Activated B cell treated with CpG ODN at 0.5 μM for 24 hours (primary cell): ENCODE measurements at regions of chr1 and their contacts with region 1.

Region 1: DNA sequence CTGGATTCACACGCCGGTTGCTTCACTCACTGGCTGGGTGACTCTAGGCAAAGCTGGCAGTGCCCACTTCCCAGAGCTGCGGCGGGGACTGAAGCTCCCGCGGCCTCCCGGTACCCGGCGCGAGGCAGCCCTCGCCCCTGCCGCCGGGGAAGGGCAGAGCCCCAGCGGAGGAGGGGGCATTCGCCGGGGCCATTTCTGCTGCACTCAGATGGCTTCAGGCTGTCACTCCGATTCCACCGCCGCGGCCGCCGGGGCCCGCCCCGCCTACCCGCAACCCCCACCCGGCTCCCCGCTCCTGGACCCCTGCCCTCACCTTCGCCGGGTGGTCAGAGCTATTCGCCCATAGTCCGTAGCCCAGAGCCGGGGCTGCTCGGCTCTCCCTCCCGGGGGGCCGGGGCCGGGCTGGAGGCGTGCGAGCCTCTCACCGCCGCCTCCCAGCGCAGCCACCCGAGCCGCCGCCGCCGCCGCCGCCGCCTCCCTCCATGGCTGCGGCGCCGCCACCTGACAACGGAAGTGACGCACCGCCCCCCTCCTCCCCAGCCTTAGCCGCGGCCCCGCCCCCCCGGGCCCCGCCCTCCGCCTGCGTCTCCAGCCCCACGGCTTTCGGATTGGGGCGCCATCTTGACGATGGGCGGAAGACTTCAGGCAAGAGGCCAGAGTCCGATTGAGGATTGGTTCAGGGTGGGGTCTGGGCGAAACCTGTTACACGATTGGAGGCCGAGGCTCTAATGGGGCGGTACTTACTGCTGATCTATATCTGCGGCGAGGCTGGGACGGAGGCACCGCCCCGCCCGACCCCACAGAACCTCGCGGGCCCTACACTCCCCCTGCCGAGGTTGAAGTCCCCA is at the start of gene STK40:
- DNase-seq: peak; percentile 88
- ATAC-seq: peak; percentile 83
- H3K4me3 Mint-ChIP-seq: peak within 1 kb of the TSS; percentile 91
- H3K27ac Mint-ChIP-seq: peak within 1 kb of the TSS; percentile 100
- H3K4me1 Mint-ChIP-seq: peaks cover 88% of the 10 kb centered on the region
- H3K27me3 Mint-ChIP-seq: no peaks in the 10 kb centered on the region
- CTCF ChIP-seq: no peak
- total RNA-seq, gene STK40: 62.7 and 63.7 TPM in 2 replicates

Region 2: GRCh38 chr1:35379317-35380000 is 1006.2 kb before region 1 on chr1:
- CTCF ChIA-PET with region 1: no interaction called
- POLR2A ChIA-PET with region 1: no interaction called
- intact Hi-C with region 1: no loop called
- DNase-seq: no peak
- ATAC-seq: no peak
- H3K4me3 Mint-ChIP-seq: no peak overlapping the region
- H3K27ac Mint-ChIP-seq: no peak overlapping the region
- H3K4me1 Mint-ChIP-seq: no peaks in the 10 kb centered on the region
- H3K27me3 Mint-ChIP-seq: no peaks in the 10 kb centered on the region
- CTCF ChIP-seq: no peak

Region 3: DNA sequence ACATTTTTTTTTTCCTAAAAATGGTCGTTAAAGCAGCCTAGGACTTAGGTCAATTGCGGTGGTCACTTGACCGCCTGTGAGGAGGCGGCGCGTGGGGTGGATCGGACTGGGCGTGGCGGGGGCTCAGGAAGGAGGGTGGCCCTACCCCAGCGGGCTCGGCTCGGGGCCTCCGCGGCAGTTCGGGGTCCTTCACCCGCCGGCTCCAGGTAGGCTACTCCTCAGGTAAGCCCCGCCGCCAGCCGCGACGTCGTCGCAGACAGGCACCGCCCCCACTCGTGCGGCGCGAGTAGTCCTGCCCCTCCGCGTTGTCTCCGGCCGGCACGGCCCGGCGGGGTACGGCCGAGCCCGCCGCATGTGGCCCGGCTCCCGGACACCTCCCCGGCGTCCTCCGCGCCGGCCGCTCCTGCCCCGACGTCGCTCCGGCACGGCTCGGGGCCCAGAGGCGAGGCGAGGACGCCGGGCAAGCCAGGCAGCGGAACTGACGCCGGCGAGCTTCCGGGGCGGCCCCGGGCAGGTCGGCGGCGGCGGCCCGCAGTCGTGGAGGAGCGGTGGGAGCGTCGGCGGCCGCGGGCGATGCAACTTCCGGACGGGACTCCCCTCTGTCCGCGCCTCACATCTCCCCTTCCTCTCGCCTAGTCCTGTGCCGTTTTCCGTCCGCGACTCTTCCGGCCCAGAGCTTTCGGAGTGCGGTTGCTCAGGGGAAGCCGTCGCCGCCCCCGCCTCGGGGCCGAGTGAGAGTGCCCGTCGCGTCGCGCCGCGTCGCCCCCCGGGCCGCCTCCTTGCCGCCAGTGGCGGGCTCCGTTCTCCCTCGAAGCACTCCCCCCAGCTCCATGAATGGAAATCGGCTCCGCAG is 454.8 kb before region 1 on chr1 and contains the start of gene AGO3:
- CTCF ChIA-PET with region 1: no interaction called
- POLR2A ChIA-PET with region 1: no interaction called
- intact Hi-C with region 1: loop called (anchors 5 kb)
- DNase-seq: peak; percentile 86
- ATAC-seq: peak; percentile 91
- H3K4me3 Mint-ChIP-seq: peak within 1 kb of the TSS; percentile 91
- H3K27ac Mint-ChIP-seq: peak within 1 kb of the TSS; percentile 91
- H3K4me1 Mint-ChIP-seq: peaks cover 28% of the 10 kb centered on the region
- H3K27me3 Mint-ChIP-seq: no peaks in the 10 kb centered on the region
- CTCF ChIP-seq: no peak
- total RNA-seq, gene AGO3: 30.7 and 37.2 TPM in 2 replicates

Region 4: DNA sequence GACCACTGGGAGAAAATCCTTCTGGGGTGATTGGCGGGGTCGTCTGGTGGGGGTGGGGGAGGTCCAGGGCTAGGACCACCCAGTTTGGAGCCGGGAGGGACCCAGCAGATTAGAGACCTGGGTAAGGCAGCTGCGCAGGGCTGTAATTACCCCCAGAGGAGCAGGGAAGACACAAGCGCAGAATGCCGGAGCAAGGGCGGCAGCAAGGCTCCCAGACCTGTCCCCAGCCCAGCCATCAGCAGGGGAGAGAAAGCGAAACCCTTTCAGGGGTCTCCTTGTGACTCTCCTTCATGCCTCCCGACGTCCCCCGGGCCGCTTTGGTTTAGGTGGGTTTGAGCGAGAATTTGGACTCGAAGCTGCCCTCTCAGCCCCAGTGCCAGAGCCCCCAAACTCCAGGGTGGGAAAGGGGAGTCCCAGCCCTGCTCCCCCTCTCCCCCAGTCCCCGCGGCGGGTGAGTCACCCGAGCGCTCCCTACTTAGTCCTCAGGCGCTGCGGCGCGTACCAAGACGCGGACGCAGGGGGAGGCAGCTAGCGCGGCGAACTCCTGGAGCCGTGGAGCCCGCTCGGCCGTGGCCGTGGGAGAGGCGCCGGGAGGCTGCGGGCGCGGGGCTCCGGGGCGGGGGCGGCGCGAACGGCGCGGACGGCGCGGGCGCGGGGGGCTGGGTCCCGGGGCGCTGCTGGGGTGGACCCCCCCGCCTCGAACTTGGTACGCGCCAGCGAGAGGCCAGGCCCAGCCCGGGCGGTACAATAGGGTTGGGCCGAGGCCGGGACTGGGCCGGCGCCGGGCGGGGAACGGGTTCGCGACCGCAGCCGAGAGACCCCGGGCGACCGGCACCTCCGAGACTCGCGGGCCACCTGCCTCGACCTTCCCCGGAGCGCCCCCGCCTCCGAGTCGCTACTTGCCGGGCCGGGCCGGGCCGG is 230.0 kb before region 1 on chr1 and contains the start of gene MAP7D1:
- CTCF ChIA-PET with region 1: no interaction called
- POLR2A ChIA-PET with region 1: interaction called, 18 read pairs
- intact Hi-C with region 1: no loop called
- DNase-seq: peak; percentile 88
- ATAC-seq: peak; percentile 76
- H3K4me3 Mint-ChIP-seq: peak within 1 kb of the TSS; percentile 89
- H3K27ac Mint-ChIP-seq: peak within 1 kb of the TSS; percentile 90
- H3K4me1 Mint-ChIP-seq: peaks cover 65% of the 10 kb centered on the region
- H3K27me3 Mint-ChIP-seq: no peaks in the 10 kb centered on the region
- CTCF ChIP-seq: no peak
- total RNA-seq, gene MAP7D1: 56.5 and 59.9 TPM in 2 replicates

Region 5: GRCh38 chr1:36397378-36398230 is 12.0 kb after region 1 on chr1 and contains the start of gene LSM10:
- CTCF ChIA-PET with region 1: interaction called, 17 read pairs
- POLR2A ChIA-PET with region 1: interaction called, 164 read pairs
- intact Hi-C with region 1: loop called (anchors 1 kb)
- DNase-seq: peak; percentile 87
- ATAC-seq: peak; percentile 82
- H3K4me3 Mint-ChIP-seq: peak within 1 kb of the TSS; percentile 99
- H3K27ac Mint-ChIP-seq: peak within 1 kb of the TSS; percentile 95
- H3K4me1 Mint-ChIP-seq: peaks cover 68% of the 10 kb centered on the region
- H3K27me3 Mint-ChIP-seq: no peaks in the 10 kb centered on the region
- CTCF ChIP-seq: no peak
- total RNA-seq, gene LSM10: 59.8 and 62.7 TPM in 2 replicates

Region 6: GRCh38 chr1:36450270-36450918 is 64.8 kb after region 1 on chr1 and contains the start of gene OSCP1:
- CTCF ChIA-PET with region 1: no interaction called
- POLR2A ChIA-PET with region 1: interaction called, 14 read pairs
- intact Hi-C with region 1: loop called (anchors 1 kb)
- DNase-seq: peak; percentile 88
- ATAC-seq: peak; percentile 97
- H3K4me3 Mint-ChIP-seq: peak within 1 kb of the TSS; percentile 90
- H3K27ac Mint-ChIP-seq: peak within 1 kb of the TSS; percentile 97
- H3K4me1 Mint-ChIP-seq: peaks cover 18% of the 10 kb centered on the region
- H3K27me3 Mint-ChIP-seq: no peaks in the 10 kb centered on the region
- CTCF ChIP-seq: no peak
- total RNA-seq, gene OSCP1: 1.2 and 1.8 TPM in 2 replicates

Region 7: GRCh38 chr1:37035796-37036666 is 650.4 kb after region 1 on chr1:
- CTCF ChIA-PET with region 1: no interaction called
- POLR2A ChIA-PET with region 1: no interaction called
- intact Hi-C with region 1: no loop called
- DNase-seq: peak; percentile 23
- ATAC-seq: peak; percentile 86
- H3K4me3 Mint-ChIP-seq: peak overlapping the region; percentile 70
- H3K27ac Mint-ChIP-seq: no peak overlapping the region
- H3K4me1 Mint-ChIP-seq: peaks cover 23% of the 10 kb centered on the region
- H3K27me3 Mint-ChIP-seq: peaks cover 62% of the 10 kb centered on the region
- CTCF ChIP-seq: no peak